IMR-90 (cell line): ENCODE measurements at regions of chr6 and their contacts with region 1.

Region 1: DNA sequence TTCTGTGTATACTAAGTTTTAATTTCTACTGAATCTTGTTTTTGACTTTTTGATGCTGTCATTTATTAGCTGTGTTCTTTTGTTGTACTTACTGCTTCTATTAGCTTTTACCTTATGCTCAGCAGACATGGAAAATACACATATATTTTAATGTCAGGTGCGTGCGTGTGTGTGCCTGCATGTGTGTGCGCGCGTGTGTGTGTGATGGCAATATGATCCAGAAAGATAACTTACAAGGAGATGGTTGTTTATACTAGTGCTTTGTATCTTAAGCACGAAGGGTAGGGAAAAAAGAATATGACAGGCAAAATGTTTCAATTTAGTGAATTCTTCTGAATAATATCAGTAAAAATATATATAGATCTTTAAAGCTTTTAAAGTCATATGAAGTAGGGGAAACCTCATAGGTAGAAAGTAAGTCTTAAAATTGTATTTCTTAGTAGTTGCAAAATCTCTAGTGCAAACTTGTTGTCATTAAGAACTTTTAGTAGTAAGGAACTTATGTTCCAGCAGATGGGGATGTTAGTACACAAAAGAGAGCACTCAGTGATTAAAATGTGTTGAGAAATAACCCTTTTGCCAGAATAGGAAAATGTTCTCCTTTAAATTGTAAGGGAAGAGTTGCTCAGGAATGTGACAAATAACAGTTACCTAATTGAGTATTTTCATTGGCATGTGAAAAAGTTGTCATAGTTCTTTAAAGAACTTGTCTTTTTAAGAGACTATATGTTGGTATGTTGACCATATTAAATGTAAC is 13.2 kb downstream of the QKI start:
- DNase-seq: peak; percentile 82
- ATAC-seq: peak; percentile 56
- H3K4me3 ChIP-seq: no peak overlapping the region
- H3K27ac ChIP-seq: no peak overlapping the region
- H3K4me1 ChIP-seq: peaks cover 18% of the 10 kb centered on the region
- H3K27me3 ChIP-seq: no peaks in the 10 kb centered on the region
- CTCF ChIP-seq: peak; percentile 63
- POLR2A ChIP-seq: no peak
- RAD21 ChIP-seq: peak; percentile 77

Region 2: GRCh38 chr6:163554663-163555062 is 127.0 kb after region 1 on chr6:
- CTCF ChIA-PET with region 1: interaction called, 4 read pairs
- POLR2A ChIA-PET with region 1: no interaction called
- dilution Hi-C with region 1: no loop called
- in situ Hi-C with region 1: no loop called
- intact Hi-C with region 1: loop called (anchors 1 kb)
- DNase-seq: peak; percentile 34
- ATAC-seq: peak; percentile 48
- H3K4me3 ChIP-seq: no peak overlapping the region
- H3K27ac ChIP-seq: no peak overlapping the region
- H3K4me1 ChIP-seq: 0 out of 2 replicates have a peak, but pooled peaks cover 1% of the 10 kb centered on the region
- H3K27me3 ChIP-seq: no peaks in the 10 kb centered on the region
- CTCF ChIP-seq: peak; percentile 53
- POLR2A ChIP-seq: no peak
- RAD21 ChIP-seq: peak; percentile 61

Region 3: DNA sequence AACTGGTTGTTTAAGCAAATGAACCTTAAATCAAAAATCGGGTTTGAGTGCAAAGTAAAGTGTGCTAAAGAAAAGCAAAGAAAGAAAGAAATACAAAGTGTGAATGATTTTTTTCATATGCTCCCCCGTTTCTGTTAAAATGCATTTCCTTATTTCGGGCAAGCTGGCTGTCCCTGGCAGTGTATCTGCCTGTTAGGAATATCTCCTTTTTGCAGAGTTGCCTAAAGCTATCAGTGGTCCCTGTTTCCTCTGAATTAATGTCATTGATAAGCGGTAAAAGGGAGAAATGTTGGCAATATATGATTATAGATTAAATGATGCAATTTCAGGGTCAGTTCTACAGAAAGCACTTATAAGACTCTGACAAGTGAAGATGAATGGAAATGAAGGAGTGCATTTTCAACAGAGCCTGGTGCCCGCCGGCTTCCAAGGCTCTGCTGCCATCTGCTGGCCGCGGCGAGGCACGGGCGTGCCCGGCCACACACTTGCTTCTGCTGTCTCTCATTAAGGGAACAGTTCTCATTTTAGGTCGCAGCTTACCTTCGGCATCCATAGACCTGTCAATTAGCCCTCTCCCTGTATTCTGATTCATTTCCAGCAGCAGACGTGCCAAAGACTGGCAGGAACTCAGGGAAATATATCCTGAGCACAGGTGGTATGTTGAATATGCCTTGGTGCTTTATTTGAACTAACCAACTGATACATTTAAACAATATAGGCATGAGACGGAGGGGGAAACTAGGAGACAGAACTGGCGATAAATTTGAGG is 1499.8 kb after region 1 on chr6:
- CTCF ChIA-PET with region 1: no interaction called
- POLR2A ChIA-PET with region 1: no interaction called
- dilution Hi-C with region 1: no loop called
- in situ Hi-C with region 1: no loop called
- intact Hi-C with region 1: loop called (anchors 1 kb)
- DNase-seq: peak; percentile 27
- ATAC-seq: peak; percentile 96
- H3K4me3 ChIP-seq: no peak overlapping the region
- H3K27ac ChIP-seq: no peak overlapping the region
- H3K4me1 ChIP-seq: no peaks in the 10 kb centered on the region
- H3K27me3 ChIP-seq: no peaks in the 10 kb centered on the region
- CTCF ChIP-seq: peak; percentile 81
- POLR2A ChIP-seq: no peak
- RAD21 ChIP-seq: peak; percentile 85

Region 4: GRCh38 chr6:165049364-165049763 is 1621.7 kb after region 1 on chr6:
- CTCF ChIA-PET with region 1: no interaction called
- POLR2A ChIA-PET with region 1: no interaction called
- dilution Hi-C with region 1: no loop called
- in situ Hi-C with region 1: no loop called
- intact Hi-C with region 1: loop called (anchors 5 kb)
- DNase-seq: no peak
- ATAC-seq: no peak
- H3K4me3 ChIP-seq: no peak overlapping the region
- H3K27ac ChIP-seq: no peak overlapping the region
- H3K4me1 ChIP-seq: no peaks in the 10 kb centered on the region
- H3K27me3 ChIP-seq: no peaks in the 10 kb centered on the region
- CTCF ChIP-seq: no peak; the same call in 1 of the 2 replicates
- POLR2A ChIP-seq: no peak
- RAD21 ChIP-seq: no peak